Activated CD4-positive, alpha-beta T cell treated with anti-CD3 and anti-CD28 coated beads for 36 hours (primary cell): ENCODE measurements at regions of chr11 and their contacts with region 1.

Region 1: GRCh38 chr11:94417386-94417987 is 16.3 kb upstream of the GPR83 start:
- DNase-seq: no peak
- ATAC-seq: no peak
- H3K4me3 Mint-ChIP-seq: no peak overlapping the region
- H3K27ac Mint-ChIP-seq: no peak overlapping the region
- H3K4me1 Mint-ChIP-seq: no peaks in the 10 kb centered on the region
- H3K27me3 Mint-ChIP-seq: no peaks in the 10 kb centered on the region

Region 2: DNA sequence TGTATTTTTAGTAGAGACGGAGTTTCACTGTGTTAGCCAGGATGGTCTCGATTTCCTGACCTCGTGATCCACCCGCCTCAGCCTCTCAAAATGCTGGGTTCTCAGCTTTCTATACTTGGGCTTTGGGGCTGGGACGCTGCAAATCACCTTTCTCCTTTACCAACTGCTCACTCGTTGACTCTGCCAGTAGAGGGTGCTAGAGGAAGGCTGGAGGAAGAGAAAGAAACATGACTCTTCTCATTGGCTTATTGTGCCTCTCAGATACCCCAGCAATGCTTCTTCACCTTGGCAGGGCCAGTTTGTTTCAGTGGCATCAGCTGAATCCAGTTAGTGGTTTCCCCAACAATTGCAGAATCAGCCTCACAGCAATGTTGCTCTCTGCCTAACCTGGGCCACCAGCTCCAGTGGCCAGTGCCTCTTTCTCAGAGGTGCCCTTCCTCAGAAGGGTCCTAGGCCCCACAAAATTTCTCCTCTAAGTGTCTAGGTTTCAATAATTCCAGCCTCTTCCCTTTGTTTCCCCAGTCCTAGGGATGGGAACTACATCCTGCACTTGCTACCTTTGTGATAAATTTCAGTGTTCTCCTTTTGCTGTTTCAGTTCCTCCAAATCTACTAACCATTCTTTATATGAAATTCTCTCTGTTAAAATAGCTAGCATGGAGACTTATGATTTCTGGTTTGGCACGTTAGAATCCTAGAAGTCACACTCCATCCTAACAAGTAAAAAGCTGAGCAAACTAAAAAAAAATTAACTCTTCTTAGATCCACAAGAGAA is 495.6 kb before region 1 on chr11:
- CTCF ChIA-PET with region 1: no interaction called
- POLR2A ChIA-PET with region 1: no interaction called
- intact Hi-C with region 1: loop called in 1 of 2 experiments (anchors 5 kb)
- DNase-seq: peak; percentile 49
- ATAC-seq: peak; percentile 53
- H3K4me3 Mint-ChIP-seq: no peak overlapping the region
- H3K27ac Mint-ChIP-seq: no peak overlapping the region
- H3K4me1 Mint-ChIP-seq: no peaks in the 10 kb centered on the region
- H3K27me3 Mint-ChIP-seq: peaks cover 38% of the 10 kb centered on the region

Region 3: GRCh38 chr11:94171693-94172440 is 245.6 kb before region 1 on chr11:
- CTCF ChIA-PET with region 1: interaction called, 3 read pairs
- POLR2A ChIA-PET with region 1: no interaction called
- intact Hi-C with region 1: loop called in 1 of 2 experiments (anchors 5 kb)
- DNase-seq: peak; percentile 70
- ATAC-seq: peak; percentile 47
- H3K4me3 Mint-ChIP-seq: no peak overlapping the region
- H3K27ac Mint-ChIP-seq: no peak overlapping the region
- H3K4me1 Mint-ChIP-seq: peaks cover 14% of the 10 kb centered on the region
- H3K27me3 Mint-ChIP-seq: no peaks in the 10 kb centered on the region

Region 4: DNA sequence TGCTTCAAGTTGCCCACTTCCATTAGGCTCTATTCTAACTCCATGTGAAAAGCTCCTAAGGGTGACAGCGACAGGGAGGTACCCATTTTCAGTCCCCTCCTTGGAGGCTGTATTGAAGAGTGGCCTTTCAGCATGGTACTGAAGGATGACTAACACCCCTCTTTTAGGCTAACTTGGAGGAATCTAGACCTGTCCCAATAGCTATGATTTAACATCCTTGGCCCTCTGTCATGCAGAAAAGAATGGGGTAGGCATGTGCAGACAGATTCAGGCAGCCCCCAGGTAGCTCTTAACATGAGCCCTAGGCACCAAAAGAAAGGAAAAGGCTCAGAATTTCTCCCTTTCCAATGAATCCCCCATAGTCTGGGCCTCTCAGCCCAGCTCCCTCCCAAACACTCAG is 261.4 kb after region 1 on chr11:
- CTCF ChIA-PET with region 1: no interaction called
- POLR2A ChIA-PET with region 1: interaction called, 10 read pairs
- intact Hi-C with region 1: no loop called
- DNase-seq: no peak
- ATAC-seq: no peak
- H3K4me3 Mint-ChIP-seq: no peak overlapping the region
- H3K27ac Mint-ChIP-seq: no peak overlapping the region
- H3K4me1 Mint-ChIP-seq: no peaks in the 10 kb centered on the region
- H3K27me3 Mint-ChIP-seq: peaks cover 8% of the 10 kb centered on the region